B cell (primary cell): ENCODE measurements at regions of chr14 and their contacts with region 1.

Region 1: DNA sequence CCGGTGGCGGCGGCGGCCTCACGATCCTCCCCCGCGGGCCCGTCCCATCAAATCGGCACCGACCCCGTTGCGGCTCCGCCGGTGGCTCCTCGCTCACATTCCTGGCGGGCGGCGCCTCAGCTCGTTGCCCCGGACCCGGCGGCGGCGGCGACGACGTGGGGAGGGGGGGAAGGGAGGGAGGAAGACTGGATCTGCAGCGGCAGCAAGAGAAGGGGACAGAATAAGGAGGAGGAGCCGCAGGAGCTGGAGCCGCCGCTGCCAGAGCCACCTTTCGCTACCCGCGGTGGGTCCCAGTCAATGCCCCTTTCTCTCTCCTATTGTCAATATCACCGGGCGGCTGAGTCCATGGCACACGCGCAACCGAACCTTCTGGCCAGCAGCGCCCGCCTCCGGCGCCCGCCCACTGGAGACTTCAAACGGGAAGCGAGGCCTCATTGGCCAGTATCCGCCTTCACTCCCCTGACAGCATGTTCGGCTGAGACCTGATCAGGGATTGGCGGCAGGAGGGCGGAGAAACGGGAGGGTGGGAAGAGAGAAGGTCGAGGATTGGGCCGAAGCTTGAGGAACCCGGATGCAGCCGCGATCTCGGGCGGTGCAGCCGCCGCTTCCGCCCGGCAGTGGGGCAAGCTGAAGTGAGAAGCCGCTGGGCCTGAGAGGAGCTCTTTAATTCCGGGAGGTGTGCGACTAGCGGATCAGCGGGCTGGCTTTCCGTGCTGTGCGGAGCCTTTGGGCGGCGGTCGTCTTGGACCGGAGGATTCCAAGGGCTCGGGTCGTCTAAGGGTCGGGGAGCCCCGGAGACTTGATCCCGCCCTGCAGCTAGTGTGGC is at the start of gene PPP2R5E:
- DNase-seq: peak; percentile 98
- ATAC-seq: peak; percentile 96
- H3K4me3 ChIP-seq: peak within 1 kb of the TSS; percentile 63 to 98 (median 94)
- H3K4me3 Mint-ChIP-seq: peak within 1 kb of the TSS; percentile 90
- H3K27ac ChIP-seq: peak within 1 kb of the TSS; percentile 82 to 90
- H3K27ac Mint-ChIP-seq: peak within 1 kb of the TSS; percentile 91
- H3K4me1 ChIP-seq: peaks cover 12 to 21% of the 10 kb centered on the region in 2 donors
- H3K4me1 Mint-ChIP-seq: peaks cover 28% of the 10 kb centered on the region
- H3K27me3 ChIP-seq: no peaks in the 10 kb centered on the region
- H3K27me3 Mint-ChIP-seq: no peaks in the 10 kb centered on the region
- CTCF ChIP-seq: no peak
- total RNA-seq, gene PPP2R5E: 40.3 and 40.6 TPM in 2 replicates

Region 2: GRCh38 chr14:63388763-63389431 is 154.3 kb before region 1 on chr14:
- CTCF ChIA-PET with region 1: interaction called, 14 read pairs
- POLR2A ChIA-PET with region 1: no interaction called
- intact Hi-C with region 1: no loop called
- DNase-seq: peak; percentile 45
- ATAC-seq: peak; percentile 36
- H3K4me3 ChIP-seq: no peak overlapping the region
- H3K4me3 Mint-ChIP-seq: no peak overlapping the region
- H3K27ac ChIP-seq: no peak overlapping the region
- H3K27ac Mint-ChIP-seq: no peak overlapping the region
- H3K4me1 ChIP-seq: peaks cover 0 to 1% of the 10 kb centered on the region in 2 donors
- H3K4me1 Mint-ChIP-seq: peaks cover 5% of the 10 kb centered on the region
- H3K27me3 ChIP-seq: no peaks in the 10 kb centered on the region
- H3K27me3 Mint-ChIP-seq: no peaks in the 10 kb centered on the region
- CTCF ChIP-seq: peak; percentile 74

Region 3: GRCh38 chr14:63727774-63728728 is 184.8 kb after region 1 on chr14 and contains the start of gene SGPP1:
- CTCF ChIA-PET with region 1: interaction called, 3 read pairs
- POLR2A ChIA-PET with region 1: no interaction called
- intact Hi-C with region 1: loop called (anchors 5 kb)
- DNase-seq: peak; percentile 92
- ATAC-seq: peak; percentile 92
- H3K4me3 ChIP-seq: peak within 1 kb of the TSS; percentile 79 to 95 (median 92)
- H3K4me3 Mint-ChIP-seq: peak within 1 kb of the TSS; percentile 100
- H3K27ac ChIP-seq: peak within 1 kb of the TSS; percentile 78 to 81
- H3K27ac Mint-ChIP-seq: peak within 1 kb of the TSS; percentile 97
- H3K4me1 ChIP-seq: peaks cover 20 to 29% of the 10 kb centered on the region in 2 donors
- H3K4me1 Mint-ChIP-seq: peaks cover 35% of the 10 kb centered on the region
- H3K27me3 ChIP-seq: no peaks in the 10 kb centered on the region
- H3K27me3 Mint-ChIP-seq: no peaks in the 10 kb centered on the region
- CTCF ChIP-seq: peak; percentile 49
- total RNA-seq, gene SGPP1: 44.3 and 46.4 TPM in 2 replicates

Region 4: DNA sequence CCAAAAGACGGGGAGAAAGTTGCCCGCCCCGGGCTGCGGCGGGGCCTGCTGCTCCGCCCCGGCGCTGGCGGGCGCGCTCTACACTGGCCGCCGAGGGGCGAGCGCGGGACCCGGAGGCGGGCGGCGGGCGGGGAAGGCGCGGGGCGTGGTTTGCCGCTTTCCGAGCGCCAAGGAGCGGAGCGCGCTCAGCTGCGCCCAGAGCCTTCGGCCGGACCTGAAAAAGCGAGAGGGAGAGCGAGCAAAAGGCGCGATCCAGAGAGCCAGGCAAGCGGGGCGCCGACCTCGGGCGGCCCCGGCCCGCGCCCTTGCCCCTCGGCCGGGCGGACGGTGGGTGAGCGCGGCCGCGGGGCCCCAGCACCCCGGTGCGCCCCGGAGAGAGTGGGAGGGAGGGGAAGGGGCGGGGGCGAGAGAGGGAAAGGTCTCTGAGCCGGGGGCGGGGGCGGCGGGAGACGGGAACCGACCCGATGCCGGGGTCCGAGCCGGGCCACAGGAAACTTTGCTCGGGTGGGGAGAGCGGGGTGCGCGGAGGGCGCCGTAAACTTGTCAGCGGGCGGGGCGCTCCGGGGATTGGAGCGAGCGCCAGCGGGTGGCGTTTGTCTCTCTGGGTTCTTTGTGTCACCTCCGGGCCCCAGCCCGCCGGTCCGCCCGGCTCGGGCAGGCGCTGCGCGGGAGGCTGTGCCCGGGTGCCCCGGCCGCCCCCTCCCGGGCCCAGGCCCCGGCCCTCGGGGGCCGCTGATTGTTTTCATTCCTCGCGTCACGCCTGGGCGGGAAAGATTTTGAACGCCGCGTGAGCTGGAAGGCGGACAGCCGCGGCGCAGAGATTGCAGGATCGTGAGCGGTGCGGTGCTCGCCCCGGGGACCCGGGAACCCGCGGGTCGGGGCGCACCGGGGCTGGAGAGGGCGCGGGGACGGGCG is 309.9 kb after region 1 on chr14 and contains the start of gene SYNE2:
- CTCF ChIA-PET with region 1: no interaction called
- POLR2A ChIA-PET with region 1: no interaction called
- intact Hi-C with region 1: loop called (anchors 5 kb)
- DNase-seq: peak; percentile 89
- ATAC-seq: peak; percentile 84
- H3K4me3 ChIP-seq: peak within 1 kb of the TSS; percentile 46 to 72 (median 64)
- H3K4me3 Mint-ChIP-seq: peak within 1 kb of the TSS; percentile 94
- H3K27ac ChIP-seq: peak within 1 kb of the TSS; percentile 30 to 43
- H3K27ac Mint-ChIP-seq: peak within 1 kb of the TSS; percentile 95
- H3K4me1 ChIP-seq: peaks cover 13 to 14% of the 10 kb centered on the region in 2 donors
- H3K4me1 Mint-ChIP-seq: peaks cover 27% of the 10 kb centered on the region
- H3K27me3 ChIP-seq: peaks cover 0 to 6% (median 0%) of the 10 kb centered on the region in 4 experiments
- H3K27me3 Mint-ChIP-seq: no peaks in the 10 kb centered on the region
- CTCF ChIP-seq: peak; percentile 33
- total RNA-seq, gene SYNE2: 105 TPM in 2 replicates

Region 5: GRCh38 chr14:64387694-64388532 is 844.7 kb after region 1 on chr14 and contains the start of gene MTHFD1:
- CTCF ChIA-PET with region 1: no interaction called
- POLR2A ChIA-PET with region 1: interaction called, 5 read pairs
- intact Hi-C with region 1: loop called (anchors 2 kb)
- DNase-seq: peak; percentile 98
- ATAC-seq: peak; percentile 75
- H3K4me3 ChIP-seq: peak within 1 kb of the TSS; percentile 68 to 93 (median 84)
- H3K4me3 Mint-ChIP-seq: peak within 1 kb of the TSS; percentile 93
- H3K27ac ChIP-seq: peak within 1 kb of the TSS; percentile 75 to 80
- H3K27ac Mint-ChIP-seq: peak within 1 kb of the TSS; percentile 95
- H3K4me1 ChIP-seq: peaks cover 27 to 34% of the 10 kb centered on the region in 2 donors
- H3K4me1 Mint-ChIP-seq: peaks cover 42% of the 10 kb centered on the region
- H3K27me3 ChIP-seq: no peaks in the 10 kb centered on the region
- H3K27me3 Mint-ChIP-seq: no peaks in the 10 kb centered on the region
- CTCF ChIP-seq: no peak
- total RNA-seq, gene MTHFD1: 47.1 and 51.3 TPM in 2 replicates

Region 6: DNA sequence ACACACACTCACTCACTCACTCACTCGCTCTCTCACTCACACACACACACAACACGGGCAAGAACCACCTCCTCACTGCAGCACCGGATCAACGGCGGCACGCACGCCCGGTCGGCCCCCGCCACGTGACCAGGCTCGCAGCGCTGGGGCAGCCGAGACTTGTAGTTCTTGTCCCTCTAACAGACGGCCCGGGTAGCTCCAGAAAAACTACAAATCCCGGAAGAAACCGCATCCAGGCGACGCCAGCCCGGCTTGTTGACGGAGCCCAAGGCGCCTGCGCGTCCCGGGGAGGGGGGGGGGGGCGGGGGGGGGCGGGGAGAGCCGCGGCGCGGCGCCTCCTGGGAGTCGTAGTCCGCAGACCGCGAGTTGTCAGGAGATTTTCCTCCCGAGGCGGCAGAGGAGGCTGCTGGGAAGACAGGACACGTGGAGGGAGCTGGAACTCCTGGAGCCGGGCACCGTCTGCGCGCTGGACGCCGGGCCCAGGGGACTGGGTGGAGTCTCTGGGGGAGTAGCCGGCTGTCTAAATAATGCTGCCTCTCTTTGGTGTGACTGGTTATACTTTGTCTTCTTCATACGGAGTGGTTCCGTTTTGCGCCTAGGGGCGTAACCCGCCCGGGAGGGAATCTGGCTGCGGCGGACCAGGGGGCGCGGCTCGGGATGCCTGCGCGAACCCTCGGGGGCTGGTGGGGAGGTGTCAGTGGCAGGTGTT is 1559.4 kb after region 1 on chr14 and contains the start of gene MAX:
- CTCF ChIA-PET with region 1: no interaction called
- POLR2A ChIA-PET with region 1: no interaction called
- intact Hi-C with region 1: loop called (anchors 5 kb)
- DNase-seq: peak; percentile 98
- ATAC-seq: peak; percentile 85
- H3K4me3 ChIP-seq: peak within 1 kb of the TSS; percentile 62 to 97 (median 93)
- H3K4me3 Mint-ChIP-seq: peak within 1 kb of the TSS; percentile 91
- H3K27ac ChIP-seq: peak within 1 kb of the TSS; percentile 95 to 97
- H3K27ac Mint-ChIP-seq: peak within 1 kb of the TSS; percentile 97
- H3K4me1 ChIP-seq: peaks cover 23 to 30% of the 10 kb centered on the region in 2 donors
- H3K4me1 Mint-ChIP-seq: peaks cover 38% of the 10 kb centered on the region
- H3K27me3 ChIP-seq: no peaks in the 10 kb centered on the region
- H3K27me3 Mint-ChIP-seq: no peaks in the 10 kb centered on the region
- CTCF ChIP-seq: no peak
- total RNA-seq, gene MAX: 127 and 130 TPM in 2 replicates